ENCODE measurements at regions of chr3 and their contacts with region 1.

Region 1: DNA sequence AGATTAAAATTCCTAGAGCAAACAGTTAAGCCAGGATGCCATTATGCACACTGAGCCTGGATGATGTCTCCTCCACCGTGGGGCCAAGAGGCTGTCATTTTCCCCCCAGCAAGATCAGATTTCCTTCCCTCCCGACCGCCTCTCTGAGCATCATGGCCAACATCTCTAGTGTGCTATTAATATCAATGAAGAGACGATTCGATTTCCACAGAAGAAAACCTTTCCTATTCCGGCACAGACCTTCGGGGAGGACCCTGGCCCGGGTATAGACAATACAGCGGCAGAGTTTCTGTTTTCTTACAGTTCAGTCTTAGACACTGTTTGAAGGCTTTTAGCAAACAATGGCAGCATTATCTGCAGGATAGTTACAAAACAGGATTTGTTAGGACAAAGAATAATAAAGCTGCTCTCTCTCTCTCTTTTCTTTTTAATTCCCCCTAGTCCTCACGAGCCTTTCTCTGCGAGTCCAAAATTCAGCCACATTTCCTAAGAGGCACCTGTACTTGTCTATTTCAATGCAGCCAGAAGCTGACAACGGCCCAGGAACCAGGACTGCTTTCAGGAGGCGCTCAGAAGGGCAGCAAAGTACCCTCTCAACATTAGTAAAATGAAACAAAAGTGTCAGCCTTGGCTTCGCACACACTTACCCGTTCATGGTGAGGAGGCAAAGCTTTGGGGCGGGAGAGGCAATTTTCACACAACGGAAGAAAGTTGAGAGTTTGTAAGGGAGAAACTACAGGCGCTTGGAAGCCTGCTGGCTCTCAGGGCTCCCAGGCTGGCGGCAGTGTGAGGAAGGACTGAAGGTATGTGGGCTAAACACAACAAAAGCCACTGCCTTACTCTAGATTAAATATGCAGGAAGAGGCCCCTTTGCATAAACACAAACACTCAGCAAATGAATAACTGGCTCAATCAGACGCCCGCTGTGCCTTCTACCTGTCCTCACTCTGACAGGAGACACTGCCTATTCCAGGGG is 278.0 kb downstream of the FOXP1 start:
- DNase-seq: peak; percentile 68
- H3K4me3 Mint-ChIP-seq: peak overlapping the region; percentile 84
- H3K27ac Mint-ChIP-seq: peak overlapping the region; percentile 78
- H3K4me1 Mint-ChIP-seq: peaks cover 62% of the 10 kb centered on the region
- H3K27me3 Mint-ChIP-seq: peaks cover 30% of the 10 kb centered on the region

Region 2: DNA sequence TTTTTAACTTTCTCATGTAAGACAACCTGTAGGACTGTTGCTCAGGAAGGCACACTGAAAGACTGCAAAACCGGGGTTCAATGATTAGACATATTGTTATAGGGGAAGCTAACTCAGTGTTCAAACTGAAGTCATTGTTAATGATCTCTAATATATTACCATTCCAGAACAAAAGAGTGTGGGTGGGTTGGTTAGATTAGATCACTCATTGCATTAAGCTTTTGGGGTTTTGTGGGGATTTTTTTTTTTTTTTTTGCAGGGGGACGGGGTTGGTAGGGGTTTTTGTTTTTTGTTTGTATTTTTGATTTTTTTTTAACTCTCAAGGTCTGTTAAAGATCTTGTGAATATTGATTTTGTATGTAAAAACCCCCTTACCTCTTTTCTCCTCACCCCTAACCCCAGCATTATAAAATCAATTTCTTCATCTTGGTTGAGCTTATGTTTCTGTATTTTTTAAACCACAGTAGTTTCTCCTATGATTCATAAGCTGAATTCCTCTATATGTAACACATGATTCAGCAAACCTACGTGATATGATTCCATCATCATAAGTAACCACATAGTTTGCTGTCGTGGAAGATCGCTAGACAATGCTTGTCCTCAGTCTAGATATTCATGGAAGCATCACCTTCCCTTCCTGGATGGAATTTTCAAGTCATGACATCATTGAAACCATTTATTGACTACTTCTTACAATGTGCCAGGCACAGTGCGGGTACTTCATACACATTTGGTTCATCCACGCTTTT is 448.9 kb before region 1 on chr3:
- intact Hi-C with region 1: loop called (anchors 2 kb)
- DNase-seq: no peak
- H3K4me3 Mint-ChIP-seq: no peak overlapping the region
- H3K27ac Mint-ChIP-seq: peak overlapping the region; percentile 54
- H3K4me1 Mint-ChIP-seq: peaks cover 12% of the 10 kb centered on the region
- H3K27me3 Mint-ChIP-seq: peaks cover 19% of the 10 kb centered on the region

Region 3: GRCh38 chr3:71069797-71070196 is 235.7 kb before region 1 on chr3:
- intact Hi-C with region 1: loop called (anchors 1 kb)
- DNase-seq: peak; percentile 89
- H3K4me3 Mint-ChIP-seq: no peak overlapping the region
- H3K27ac Mint-ChIP-seq: no peak overlapping the region
- H3K4me1 Mint-ChIP-seq: peaks cover 57% of the 10 kb centered on the region
- H3K27me3 Mint-ChIP-seq: no peaks in the 10 kb centered on the region

Region 4: DNA sequence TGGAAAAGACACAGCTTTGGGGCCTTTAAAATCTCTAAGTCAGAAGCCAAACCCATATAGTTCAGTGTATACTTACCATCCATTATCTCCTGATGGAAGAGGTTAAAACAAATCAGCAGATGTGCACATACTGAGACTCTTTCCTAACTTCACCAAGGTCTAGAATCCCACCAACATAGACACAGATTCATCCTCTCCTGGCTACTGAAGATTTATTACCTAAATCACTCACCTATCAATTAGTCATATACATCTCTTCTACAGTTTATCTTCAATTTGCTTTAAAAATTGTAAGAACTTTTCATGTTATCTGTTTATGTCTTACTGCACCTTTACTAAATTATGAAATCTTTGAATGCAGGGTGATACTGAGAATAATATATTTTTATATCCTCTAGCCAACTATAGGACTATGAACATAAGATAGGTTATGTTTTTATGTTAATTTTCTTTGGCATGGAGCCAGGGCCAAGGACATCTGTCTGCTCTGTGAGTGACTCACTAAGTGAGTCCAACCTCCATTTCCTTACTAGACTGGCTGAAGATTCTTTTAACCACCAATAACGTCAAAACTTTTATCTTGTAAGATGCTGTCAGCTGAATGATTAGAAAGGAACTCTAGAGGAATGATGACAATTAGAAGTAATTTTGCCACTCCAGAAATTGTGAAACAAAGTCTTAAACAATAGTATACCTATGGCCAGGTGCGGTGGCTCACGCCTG is 119.6 kb before region 1 on chr3:
- intact Hi-C with region 1: loop called (anchors 2 kb)
- DNase-seq: no peak
- H3K4me3 Mint-ChIP-seq: no peak overlapping the region
- H3K27ac Mint-ChIP-seq: no peak overlapping the region
- H3K4me1 Mint-ChIP-seq: peaks cover 26% of the 10 kb centered on the region
- H3K27me3 Mint-ChIP-seq: no peaks in the 10 kb centered on the region

Region 5: GRCh38 chr3:71341721-71342120 is 36.2 kb after region 1 on chr3:
- intact Hi-C with region 1: no loop called
- DNase-seq: no peak
- H3K4me3 Mint-ChIP-seq: no peak overlapping the region
- H3K27ac Mint-ChIP-seq: no peak overlapping the region
- H3K4me1 Mint-ChIP-seq: no peaks in the 10 kb centered on the region
- H3K27me3 Mint-ChIP-seq: no peaks in the 10 kb centered on the region

Region 6: GRCh38 chr3:71360764-71361163 is 55.2 kb after region 1 on chr3:
- intact Hi-C with region 1: loop called (anchors 1 kb)
- DNase-seq: no peak
- H3K4me3 Mint-ChIP-seq: peak overlapping the region; percentile 23
- H3K27ac Mint-ChIP-seq: peak overlapping the region; percentile 89
- H3K4me1 Mint-ChIP-seq: peaks cover 25% of the 10 kb centered on the region
- H3K27me3 Mint-ChIP-seq: peaks cover 19% of the 10 kb centered on the region

Region 7: GRCh38 chr3:71430941-71431552 is 125.5 kb after region 1 on chr3:
- intact Hi-C with region 1: no loop called
- DNase-seq: no peak
- H3K4me3 Mint-ChIP-seq: no peak overlapping the region
- H3K27ac Mint-ChIP-seq: no peak overlapping the region
- H3K4me1 Mint-ChIP-seq: peaks cover 26% of the 10 kb centered on the region
- H3K27me3 Mint-ChIP-seq: peaks cover 15% of the 10 kb centered on the region

Region 8: GRCh38 chr3:71512000-71512399 is 206.5 kb after region 1 on chr3:
- intact Hi-C with region 1: loop called (anchors 5 kb)
- DNase-seq: peak; percentile 81
- H3K4me3 Mint-ChIP-seq: no peak overlapping the region
- H3K27ac Mint-ChIP-seq: no peak overlapping the region
- H3K4me1 Mint-ChIP-seq: peaks cover 12% of the 10 kb centered on the region
- H3K27me3 Mint-ChIP-seq: peaks cover 1% of the 10 kb centered on the region

Region 9: GRCh38 chr3:71710906-71711494 is 405.5 kb after region 1 on chr3:
- intact Hi-C with region 1: no loop called
- DNase-seq: peak; percentile 70
- H3K4me3 Mint-ChIP-seq: no peak overlapping the region
- H3K27ac Mint-ChIP-seq: no peak overlapping the region
- H3K4me1 Mint-ChIP-seq: peaks cover 52% of the 10 kb centered on the region
- H3K27me3 Mint-ChIP-seq: no peaks in the 10 kb centered on the region

Measured in activated CD4-positive, alpha-beta T cell treated with anti-CD3 and anti-CD28 coated beads, Interleukin-2, amount 10 ng/mL, durations not matched to agents 24 days and 14 days (primary cell).